Vagina (tissue), 2 donors: ENCODE measurements at regions of chr1 and their contacts with region 1.

Region 1: GRCh38 chr1:109910123-109910962 is at the start of gene CSF1:
- DNase-seq: peak in 1 of 2 donors; percentile 95
- H3K4me3 ChIP-seq: peak within 1 kb of the TSS; percentile 72 to 81
- H3K27ac ChIP-seq: peak within 1 kb of the TSS; percentile 92
- H3K4me1 ChIP-seq: peaks cover 49% of the 10 kb centered on the region
- H3K27me3 ChIP-seq: no peaks in the 10 kb centered on the region
- CTCF ChIP-seq: no peak
- POLR2A ChIP-seq: peak in 1 of 2 donors; percentile 81
- total RNA-seq, gene CSF1: 159 TPM

Region 2: GRCh38 chr1:109773146-109773899 is 137.0 kb before region 1 on chr1:
- intact Hi-C with region 1: loop called (anchors 5 kb)
- DNase-seq: no peak
- H3K4me3 ChIP-seq: no peak overlapping the region
- H3K27ac ChIP-seq: no peak overlapping the region
- H3K4me1 ChIP-seq: no peaks in the 10 kb centered on the region
- H3K27me3 ChIP-seq: no peaks in the 10 kb centered on the region
- CTCF ChIP-seq: peak; percentile 56 to 89 (median 78)
- POLR2A ChIP-seq: no peak

Region 3: DNA sequence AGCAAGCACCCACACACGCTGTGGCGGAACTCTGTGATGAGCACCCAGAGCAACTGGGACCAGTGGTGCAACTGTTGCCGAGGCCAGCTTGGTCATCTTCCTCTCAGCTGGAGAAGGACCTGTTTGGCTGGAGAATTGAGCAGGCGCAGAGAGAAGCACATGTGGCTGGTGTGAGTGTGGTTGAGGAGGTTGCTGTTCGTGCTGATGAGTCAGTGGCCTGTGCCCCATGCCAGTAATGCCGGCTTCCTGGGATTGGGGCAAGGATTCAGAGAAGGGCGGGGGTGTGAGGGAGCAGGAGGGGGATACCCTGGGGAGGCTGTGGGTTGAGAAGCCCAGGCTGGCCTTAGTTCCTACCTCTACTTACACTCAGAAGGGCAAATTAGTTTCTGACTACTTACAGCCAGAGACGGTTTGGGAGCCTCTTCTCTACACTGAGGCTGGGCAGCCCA is 89.1 kb before region 1 on chr1:
- intact Hi-C with region 1: loop called (anchors 5 kb)
- DNase-seq: peak; percentile 96
- H3K4me3 ChIP-seq: no peak overlapping the region
- H3K27ac ChIP-seq: peak overlapping the region; percentile 76
- H3K4me1 ChIP-seq: peaks cover 52% of the 10 kb centered on the region
- H3K27me3 ChIP-seq: no peaks in the 10 kb centered on the region
- CTCF ChIP-seq: no peak
- POLR2A ChIP-seq: no peak

Region 4: GRCh38 chr1:109838838-109839240 is 71.5 kb before region 1 on chr1:
- intact Hi-C with region 1: no loop called
- DNase-seq: peak; percentile 28 to 79
- H3K4me3 ChIP-seq: no peak overlapping the region
- H3K27ac ChIP-seq: peak overlapping the region; percentile 40
- H3K4me1 ChIP-seq: peaks cover 6% of the 10 kb centered on the region
- H3K27me3 ChIP-seq: no peaks in the 10 kb centered on the region
- CTCF ChIP-seq: no peak
- POLR2A ChIP-seq: no peak

Region 5: DNA sequence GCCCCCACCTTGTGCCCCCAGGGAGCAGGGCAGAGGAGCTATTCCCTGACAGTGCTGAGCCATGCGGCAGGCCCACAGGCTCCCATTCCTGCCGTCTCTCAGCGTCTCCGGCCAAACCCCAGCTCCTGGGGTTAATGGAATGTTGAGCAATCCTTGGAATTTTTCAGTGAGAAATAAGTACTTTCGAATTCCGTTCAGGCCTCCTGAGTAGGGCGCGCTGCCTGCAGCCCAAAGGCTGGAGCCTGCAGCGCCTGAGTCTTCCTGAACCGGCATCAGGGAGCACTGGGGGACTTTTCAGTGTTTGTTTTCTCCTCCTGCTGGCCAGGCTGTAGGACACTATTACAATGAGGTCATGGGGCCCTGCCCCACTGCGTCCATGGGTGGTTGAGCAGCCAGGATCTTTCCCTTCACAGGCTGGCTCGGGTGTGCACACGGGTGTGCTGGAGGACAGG is 33.0 kb before region 1 on chr1:
- intact Hi-C with region 1: loop called (anchors 5 kb)
- DNase-seq: no peak
- H3K4me3 ChIP-seq: no peak overlapping the region
- H3K27ac ChIP-seq: peak overlapping the region; percentile 83
- H3K4me1 ChIP-seq: peaks cover 66% of the 10 kb centered on the region
- H3K27me3 ChIP-seq: no peaks in the 10 kb centered on the region
- CTCF ChIP-seq: peak in 2 of 3 experiments; percentile 23 to 28
- POLR2A ChIP-seq: no peak

Region 6: GRCh38 chr1:109984456-109985275 is 74.3 kb after region 1 on chr1 and contains the start of gene AHCYL1:
- intact Hi-C with region 1: loop called (anchors 5 kb)
- DNase-seq: peak; percentile 99
- H3K4me3 ChIP-seq: peak within 1 kb of the TSS; percentile 91 to 94
- H3K27ac ChIP-seq: peak within 1 kb of the TSS; percentile 97
- H3K4me1 ChIP-seq: peaks cover 75% of the 10 kb centered on the region
- H3K27me3 ChIP-seq: no peaks in the 10 kb centered on the region
- CTCF ChIP-seq: peak; percentile 97 to 100 (median 99)
- POLR2A ChIP-seq: peak; percentile 88 to 98
- total RNA-seq, gene AHCYL1: 75.6 TPM